ENCODE measurements at regions of chr7 and their contacts with region 1.

Region 1: DNA sequence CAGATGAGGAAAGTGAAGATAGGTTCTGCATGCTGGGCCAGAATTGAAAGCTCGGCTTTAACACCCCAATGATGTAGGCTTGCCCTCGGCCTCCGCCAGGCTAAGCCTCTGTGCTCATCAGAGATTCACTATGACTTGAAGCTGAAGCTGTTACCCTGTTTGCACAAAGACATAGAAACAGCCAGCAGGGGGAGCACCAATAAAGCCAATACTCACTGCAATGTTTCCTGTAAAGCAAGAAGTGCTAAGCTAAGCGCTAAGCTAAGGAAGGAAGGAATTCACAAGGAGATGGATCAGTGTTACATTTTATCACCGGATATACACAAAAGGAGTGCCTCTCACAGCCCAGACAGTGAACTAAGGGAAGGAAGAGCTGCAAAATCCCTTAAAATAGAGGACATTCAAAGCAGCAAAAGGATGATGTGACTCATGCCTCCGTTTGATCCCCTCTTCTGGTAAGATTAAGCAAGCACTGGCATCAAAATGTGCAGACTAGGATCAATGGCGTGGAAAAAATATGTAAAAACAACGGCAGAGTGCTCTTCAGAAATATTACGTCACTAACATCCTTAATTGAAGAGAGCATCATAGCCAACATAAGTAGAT is 153.8 kb downstream of the COBL start:
- DNase-seq: peak; percentile 91
- ATAC-seq: peak; percentile 91
- H3K4me3 Mint-ChIP-seq: no peak overlapping the region
- H3K27ac Mint-ChIP-seq: peak overlapping the region; percentile 15; the same call in 1 of the 2 replicates
- H3K4me1 Mint-ChIP-seq: peaks cover 25% of the 10 kb centered on the region
- H3K27me3 Mint-ChIP-seq: no peaks in the 10 kb centered on the region
- CTCF ChIP-seq: peak; percentile 81

Region 2: GRCh38 chr7:51000956-51001355 is 161.9 kb before region 1 on chr7:
- CTCF ChIA-PET with region 1: interaction called, 10 read pairs
- POLR2A ChIA-PET with region 1: no interaction called
- DNase-seq: no peak
- ATAC-seq: peak; percentile 95
- H3K4me3 Mint-ChIP-seq: no peak overlapping the region
- H3K27ac Mint-ChIP-seq: no peak overlapping the region
- H3K4me1 Mint-ChIP-seq: no peaks in the 10 kb centered on the region; the same call in 1 of the 2 replicates
- H3K27me3 Mint-ChIP-seq: no peaks in the 10 kb centered on the region
- CTCF ChIP-seq: no peak

Region 3: GRCh38 chr7:51060536-51060935 is 102.3 kb before region 1 on chr7:
- CTCF ChIA-PET with region 1: interaction called, 18 read pairs
- POLR2A ChIA-PET with region 1: no interaction called
- DNase-seq: no peak
- ATAC-seq: peak; percentile 55; the same call in 1 of the 2 replicates
- H3K4me3 Mint-ChIP-seq: no peak overlapping the region
- H3K27ac Mint-ChIP-seq: no peak overlapping the region
- H3K4me1 Mint-ChIP-seq: no peaks in the 10 kb centered on the region; the same call in 1 of the 2 replicates
- H3K27me3 Mint-ChIP-seq: no peaks in the 10 kb centered on the region; the same call in 1 of the 2 replicates
- CTCF ChIP-seq: no peak; the same call in 1 of the 2 replicates

Region 4: DNA sequence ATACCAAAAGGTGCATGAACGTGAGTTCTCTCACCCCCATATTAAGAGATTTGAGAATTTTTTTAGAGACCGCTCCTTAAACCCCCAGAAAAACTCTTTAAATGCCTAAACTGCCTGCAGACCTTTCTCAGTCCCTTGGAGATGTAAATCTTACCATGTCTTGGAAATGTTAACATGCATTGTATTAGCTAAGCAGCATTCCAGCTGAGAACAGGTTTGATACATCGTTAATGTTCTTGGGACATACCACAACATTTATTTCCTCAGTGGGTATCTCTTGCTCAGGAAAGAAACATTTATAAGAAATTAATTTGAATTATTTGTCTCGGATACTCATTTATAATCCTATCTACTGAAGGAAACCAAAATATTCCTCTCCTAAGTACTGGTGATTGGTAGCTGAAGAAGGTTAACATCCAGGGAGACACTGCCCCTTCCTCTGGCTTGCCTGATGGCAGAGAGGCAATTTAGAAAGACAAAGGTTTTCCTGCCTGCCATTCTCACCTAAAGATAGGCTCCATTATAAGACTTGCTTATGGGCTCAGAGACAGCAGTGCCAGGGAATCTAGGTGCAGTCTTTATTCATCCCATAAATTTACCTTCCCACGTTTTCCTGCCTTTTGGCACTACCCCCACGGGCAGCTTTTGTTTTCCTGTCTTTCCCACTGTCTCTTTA is 12.6 kb after region 1 on chr7:
- CTCF ChIA-PET with region 1: interaction called, 71 read pairs
- POLR2A ChIA-PET with region 1: no interaction called
- DNase-seq: no peak
- ATAC-seq: peak; percentile 94
- H3K4me3 Mint-ChIP-seq: 0 out of 2 replicates have a peak overlapping the region, but pooled peaks have one; percentile 28
- H3K27ac Mint-ChIP-seq: peak overlapping the region; percentile 97
- H3K4me1 Mint-ChIP-seq: peaks cover 44% of the 10 kb centered on the region
- H3K27me3 Mint-ChIP-seq: no peaks in the 10 kb centered on the region
- CTCF ChIP-seq: no peak

Region 5: GRCh38 chr7:51224811-51225612 is 62.2 kb after region 1 on chr7:
- CTCF ChIA-PET with region 1: interaction called, 25 read pairs
- POLR2A ChIA-PET with region 1: no interaction called
- DNase-seq: peak; percentile 45
- ATAC-seq: peak; percentile 90
- H3K4me3 Mint-ChIP-seq: no peak overlapping the region
- H3K27ac Mint-ChIP-seq: peak overlapping the region; percentile 33; the same call in 1 of the 2 replicates
- H3K4me1 Mint-ChIP-seq: peaks cover 63% of the 10 kb centered on the region
- H3K27me3 Mint-ChIP-seq: no peaks in the 10 kb centered on the region
- CTCF ChIP-seq: no peak

Region 6: GRCh38 chr7:51366930-51367613 is 204.2 kb after region 1 on chr7:
- CTCF ChIA-PET with region 1: interaction called, 234 read pairs
- POLR2A ChIA-PET with region 1: no interaction called
- DNase-seq: peak; percentile 58
- ATAC-seq: peak; percentile 95
- H3K4me3 Mint-ChIP-seq: no peak overlapping the region
- H3K27ac Mint-ChIP-seq: no peak overlapping the region
- H3K4me1 Mint-ChIP-seq: peaks cover 25% of the 10 kb centered on the region
- H3K27me3 Mint-ChIP-seq: no peaks in the 10 kb centered on the region; the same call in 1 of the 2 replicates
- CTCF ChIP-seq: peak; percentile 64

Region 7: GRCh38 chr7:51455948-51456347 is 293.1 kb after region 1 on chr7:
- CTCF ChIA-PET with region 1: interaction called, 10 read pairs
- POLR2A ChIA-PET with region 1: no interaction called
- DNase-seq: peak; percentile 27
- ATAC-seq: 0 out of 2 replicates have a peak, but pooled peaks have one; percentile 6
- H3K4me3 Mint-ChIP-seq: no peak overlapping the region
- H3K27ac Mint-ChIP-seq: no peak overlapping the region
- H3K4me1 Mint-ChIP-seq: peaks cover 48% of the 10 kb centered on the region
- H3K27me3 Mint-ChIP-seq: peaks cover 11% of the 10 kb centered on the region
- CTCF ChIP-seq: no peak

Measured in WTC11 (cell line).